HEK293 (cell line): ENCODE measurements at regions of chr5 and their contacts with region 1.

Region 1: DNA sequence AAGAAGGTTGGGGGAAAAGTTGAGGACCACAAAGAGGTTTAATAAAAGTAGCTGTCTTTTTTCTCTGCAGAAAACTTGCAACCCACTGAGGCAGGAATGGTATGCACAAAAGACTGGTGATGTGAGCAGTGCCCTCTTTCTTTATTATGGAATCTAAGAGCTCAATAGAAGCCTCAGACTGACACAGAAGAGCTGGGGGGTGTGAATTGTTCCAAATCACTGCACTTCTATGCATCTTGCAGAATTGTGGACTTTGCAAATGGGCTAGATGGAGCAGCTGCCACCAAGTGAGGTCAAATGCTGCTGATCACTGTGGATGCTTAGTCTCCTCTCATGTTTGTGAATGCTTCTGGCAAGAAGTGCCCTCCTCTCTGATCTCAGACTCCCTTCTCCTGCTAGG is 227.1 kb downstream of the ZSWIM6 start:
- H3K4me3 ChIP-seq: no peak overlapping the region
- H3K27ac ChIP-seq: no peak overlapping the region
- H3K4me1 ChIP-seq: no peaks in the 10 kb centered on the region
- CTCF ChIP-seq: no peak

Region 2: GRCh38 chr5:61534481-61535267 is 24.5 kb before region 1 on chr5:
- CTCF ChIA-PET with region 1: no interaction called
- POLR2A ChIA-PET with region 1: no interaction called
- H3K4me3 ChIP-seq: no peak overlapping the region
- H3K27ac ChIP-seq: no peak overlapping the region
- H3K4me1 ChIP-seq: no peaks in the 10 kb centered on the region
- CTCF ChIP-seq: no peak

Region 3: GRCh38 chr5:61595426-61595825 is 36.3 kb after region 1 on chr5:
- CTCF ChIA-PET with region 1: no interaction called
- POLR2A ChIA-PET with region 1: interaction called, 14 read pairs
- H3K4me3 ChIP-seq: no peak overlapping the region
- H3K27ac ChIP-seq: no peak overlapping the region
- H3K4me1 ChIP-seq: no peaks in the 10 kb centered on the region
- CTCF ChIP-seq: no peak